BJ (cell line): ENCODE measurements at regions of chr1 and their contacts with region 1.

Region 1: GRCh38 chr1:156740679-156741612 is at the start of gene MRPL24:
- DNase-seq: peak; percentile 99
- H3K4me3 ChIP-seq: peak within 1 kb of the TSS; percentile 53
- H3K27me3 ChIP-seq: no peaks in the 10 kb centered on the region
- CTCF ChIP-seq: no peak
- polyA plus RNA-seq, gene MRPL24: 104 and 120 TPM in 2 replicates

Region 2: DNA sequence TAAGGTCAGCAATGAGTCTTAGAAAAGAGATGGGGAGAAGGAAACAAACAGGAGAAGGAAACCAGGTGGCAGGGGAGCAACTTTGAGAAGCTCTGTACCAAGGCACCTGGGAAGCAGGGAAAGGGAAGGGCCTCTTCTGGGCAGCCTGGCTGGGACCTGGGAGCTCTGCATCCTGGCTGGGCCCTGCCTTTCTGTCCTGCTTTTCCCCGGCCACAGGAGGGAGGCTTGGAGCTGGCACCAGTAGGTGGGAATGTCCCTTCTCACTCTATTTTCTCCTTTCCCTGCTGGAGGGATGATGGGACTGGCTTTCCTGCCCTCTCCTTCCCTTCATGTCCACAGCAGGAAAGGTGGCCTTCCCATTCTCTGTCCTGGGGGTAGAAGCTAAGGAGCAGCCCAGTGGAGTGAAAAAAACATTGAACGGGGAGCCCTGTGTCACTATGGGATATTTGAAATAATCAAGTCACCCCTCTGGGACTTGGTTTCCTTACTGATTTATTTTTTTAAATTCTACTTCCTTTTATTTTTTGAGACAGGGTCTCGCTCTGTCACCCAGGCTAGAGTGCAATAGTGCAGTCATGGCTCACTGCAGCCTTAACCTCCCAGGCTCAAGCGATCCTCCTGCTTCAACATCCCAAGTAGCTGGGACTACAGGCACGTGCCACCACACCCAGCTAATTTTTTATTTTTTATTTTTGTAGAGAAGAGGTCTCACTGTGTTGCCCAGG is 58.6 kb before region 1 on chr1:
- CTCF ChIA-PET with region 1: no interaction called
- POLR2A ChIA-PET with region 1: no interaction called
- DNase-seq: no peak
- H3K4me3 ChIP-seq: no peak overlapping the region
- H3K27me3 ChIP-seq: no peaks in the 10 kb centered on the region
- CTCF ChIP-seq: no peak

Region 3: GRCh38 chr1:156717275-156717805 is 23.6 kb before region 1 on chr1:
- CTCF ChIA-PET with region 1: no interaction called
- POLR2A ChIA-PET with region 1: no interaction called
- DNase-seq: no peak
- H3K4me3 ChIP-seq: no peak overlapping the region
- H3K27me3 ChIP-seq: no peaks in the 10 kb centered on the region
- CTCF ChIP-seq: no peak

Region 4: DNA sequence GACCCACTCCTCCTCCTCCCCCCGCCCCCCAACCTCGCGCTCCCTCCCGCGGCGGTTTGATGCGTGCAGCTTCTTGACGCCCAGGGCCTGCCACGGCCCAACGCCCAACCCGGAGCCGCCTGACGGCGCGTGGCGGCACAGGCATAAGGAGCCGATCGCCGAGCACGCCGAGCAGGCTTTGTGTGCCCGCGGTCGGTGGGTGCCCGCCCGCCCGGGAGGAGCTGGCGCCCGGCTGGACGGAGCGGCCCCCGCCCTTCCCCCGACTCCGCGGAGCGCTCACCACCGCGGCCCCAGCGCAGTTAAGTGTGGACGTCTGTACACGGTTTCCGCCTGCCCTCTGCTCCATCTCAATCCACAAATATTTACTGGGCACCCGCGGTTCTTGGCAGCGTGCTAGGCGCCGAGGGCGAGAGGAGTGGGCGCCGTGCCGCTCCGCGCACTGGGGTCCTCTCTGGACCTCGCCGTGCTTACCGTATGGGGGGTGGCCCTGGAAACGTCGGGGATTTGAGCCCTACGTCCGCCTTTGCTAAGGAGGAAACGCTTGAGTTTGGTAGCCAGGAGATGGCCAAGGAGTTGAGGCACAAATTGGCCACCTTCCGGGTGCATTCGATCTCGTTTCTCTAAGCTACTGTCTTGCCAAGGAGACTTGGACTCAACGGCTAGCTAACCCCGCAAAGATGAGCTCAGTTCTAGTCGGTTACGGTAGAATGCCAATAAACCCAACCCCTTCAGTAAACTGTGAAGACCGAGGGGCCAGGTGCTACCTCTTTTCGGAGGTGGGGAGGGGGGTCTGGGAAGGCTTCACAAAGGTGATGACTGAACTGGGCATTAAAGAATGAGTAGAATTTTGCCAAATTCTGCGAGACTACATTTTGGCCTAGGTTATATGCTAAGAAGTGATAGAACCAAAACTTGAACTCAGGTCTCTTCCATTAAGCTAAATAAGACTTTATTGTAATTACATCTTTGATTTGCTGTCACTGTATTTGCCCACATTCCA is 11.1 kb after region 1 on chr1:
- CTCF ChIA-PET with region 1: interaction called, 7 read pairs
- POLR2A ChIA-PET with region 1: interaction called, 10 read pairs
- DNase-seq: peak; percentile 66
- H3K4me3 ChIP-seq: peak overlapping the region; percentile 79
- H3K27me3 ChIP-seq: no peaks in the 10 kb centered on the region
- CTCF ChIP-seq: 0 out of 2 replicates have a peak, but pooled peaks have one; percentile 10

Region 5: GRCh38 chr1:156767101-156767878 is 26.3 kb after region 1 on chr1 and contains the start of gene PRCC:
- CTCF ChIA-PET with region 1: interaction called, 4 read pairs
- POLR2A ChIA-PET with region 1: interaction called, 11 read pairs
- DNase-seq: peak; percentile 100
- H3K4me3 ChIP-seq: peak within 1 kb of the TSS; percentile 97
- H3K27me3 ChIP-seq: no peaks in the 10 kb centered on the region
- CTCF ChIP-seq: no peak
- polyA plus RNA-seq, gene PRCC: 60.3 and 93.6 TPM in 2 replicates

Region 6: DNA sequence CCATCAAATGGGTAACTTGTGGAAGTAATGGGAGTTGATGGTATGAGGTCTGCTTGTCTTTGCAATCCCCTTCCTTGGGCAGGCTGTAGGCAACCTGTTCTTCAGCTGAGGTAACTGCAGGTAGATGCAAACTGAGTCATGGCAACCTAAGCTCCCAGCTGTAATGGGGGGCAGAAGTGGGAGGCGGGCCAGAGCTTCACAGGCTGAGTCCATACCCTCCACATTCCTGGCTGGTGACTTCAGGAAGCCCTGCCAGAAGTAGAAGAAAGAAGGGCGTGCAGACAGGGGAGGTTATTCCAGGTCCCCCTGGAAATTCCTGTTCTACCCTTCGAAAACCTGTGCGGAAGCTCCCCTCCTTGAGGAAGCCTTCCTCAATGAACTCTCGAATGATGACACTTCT is 259.7 kb after region 1 on chr1:
- CTCF ChIA-PET with region 1: no interaction called
- POLR2A ChIA-PET with region 1: no interaction called
- DNase-seq: no peak
- H3K4me3 ChIP-seq: no peak overlapping the region
- H3K27me3 ChIP-seq: no peaks in the 10 kb centered on the region
- CTCF ChIP-seq: no peak

Region 7: DNA sequence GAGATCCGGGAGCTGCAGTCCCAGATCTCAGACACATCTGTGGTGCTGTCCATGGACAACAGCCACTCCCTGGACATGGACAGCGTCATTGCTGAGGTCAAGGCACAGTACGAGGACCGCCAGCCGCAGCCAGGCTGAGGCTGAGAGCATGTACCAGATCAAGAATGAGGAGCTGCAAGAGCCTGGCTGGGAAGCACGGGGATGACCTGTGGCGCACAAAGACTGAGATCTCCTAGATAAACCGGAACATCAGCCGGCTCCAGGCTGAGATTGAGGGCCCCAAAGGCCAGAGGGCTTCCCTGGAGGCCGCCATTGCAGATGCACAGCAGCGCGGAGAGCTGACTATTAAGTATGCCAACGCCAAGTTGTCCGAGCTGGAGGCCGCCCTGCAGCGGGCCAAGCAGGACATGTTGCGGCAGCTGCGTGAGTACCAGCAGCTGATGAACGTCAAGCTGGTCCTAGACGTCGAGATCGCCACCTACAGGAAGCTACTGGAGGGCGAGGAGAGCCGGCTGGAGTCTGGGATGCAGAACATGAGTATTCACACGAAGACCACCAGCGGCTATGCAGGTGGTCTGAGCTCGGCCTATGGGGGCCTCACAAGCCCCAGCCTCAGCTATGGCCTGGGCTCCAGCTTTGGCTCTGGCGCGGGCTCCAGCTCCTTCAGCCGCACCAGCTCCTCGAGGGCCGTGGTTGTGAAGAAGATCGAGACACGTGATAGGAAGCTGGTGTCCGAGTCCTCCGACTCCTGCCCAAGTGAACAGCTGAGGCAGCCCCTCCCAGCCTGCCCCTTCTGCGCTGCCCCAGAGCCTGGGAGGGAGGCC is 333.2 kb after region 1 on chr1:
- CTCF ChIA-PET with region 1: no interaction called
- POLR2A ChIA-PET with region 1: no interaction called
- DNase-seq: no peak
- H3K4me3 ChIP-seq: no peak overlapping the region
- H3K27me3 ChIP-seq: peaks cover 4% of the 10 kb centered on the region; the same call in 1 of the 2 replicates
- CTCF ChIP-seq: peak; percentile 69